Activated T-helper 1 cell treated with anti-CD3 and anti-CD28 coated beads, Interleukin-12 subunit alpha, Interleukin-12 subunit beta, Interleukin-2, Interleukin-4 antibody, amounts not matched to agents 30 ng/mL and 10 ng/mL and 1 ng/mL, durations not matched to agents 14 hours and 24 hours and 36 hours (primary cell): ENCODE measurements at regions of chr1 and their contacts with region 1.

Region 1: GRCh38 chr1:179882243-179883039 is at the start of gene TOR1AIP1:
- DNase-seq: peak; percentile 98
- H3K4me3 Mint-ChIP-seq: peak within 1 kb of the TSS; percentile 95
- H3K27ac Mint-ChIP-seq: peak within 1 kb of the TSS; percentile 100
- H3K4me1 Mint-ChIP-seq: peaks cover 55% of the 10 kb centered on the region
- H3K27me3 Mint-ChIP-seq: no peaks in the 10 kb centered on the region
- total RNA-seq, gene TOR1AIP1: 76.1 and 80.5 TPM in 2 replicates

Region 2: DNA sequence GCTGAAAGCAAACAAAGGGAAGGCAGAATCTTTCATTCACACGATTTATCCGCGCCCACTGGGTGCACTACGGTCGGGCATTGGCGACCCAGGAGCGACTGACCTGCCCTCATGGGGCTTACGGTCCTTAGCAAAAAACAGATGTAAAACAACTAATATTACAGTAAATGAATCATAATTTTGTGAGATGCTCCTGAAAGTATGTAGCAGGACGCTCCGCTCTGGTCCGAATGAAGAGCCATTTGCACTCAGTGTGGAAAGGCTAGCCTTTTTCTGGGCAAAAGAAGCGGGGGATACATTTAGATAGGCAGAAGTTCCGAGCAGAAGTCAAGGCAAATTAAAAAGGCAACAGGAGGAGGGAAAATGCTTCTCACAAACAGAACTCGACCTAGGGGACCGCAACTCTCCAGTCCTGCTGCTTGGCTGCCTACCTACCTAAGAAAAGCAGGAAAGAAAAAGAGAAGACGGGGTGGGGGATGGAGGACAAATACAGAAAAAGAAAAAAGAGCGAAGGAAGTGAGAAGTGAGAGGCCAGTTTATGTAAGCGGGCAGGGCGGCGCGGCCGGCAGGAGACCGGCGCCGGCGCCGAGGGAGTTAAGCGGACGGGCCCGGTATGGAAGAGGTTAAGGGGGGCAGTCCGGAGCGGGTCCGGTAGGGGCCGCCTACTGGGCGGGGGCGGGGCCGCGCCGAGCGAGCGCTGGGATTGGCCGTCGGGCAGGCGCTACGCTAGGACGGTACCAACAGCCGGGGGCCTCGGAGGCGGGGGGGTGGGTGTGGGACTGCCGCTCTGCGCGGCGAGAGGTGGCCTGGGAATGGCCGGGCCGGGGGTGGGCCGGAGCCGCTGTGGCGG is 857.1 kb before region 1 on chr1 and contains the start of gene FAM20B:
- intact Hi-C with region 1: loop called (anchors 5 kb)
- DNase-seq: peak; percentile 86
- H3K4me3 Mint-ChIP-seq: peak within 1 kb of the TSS; percentile 89
- H3K27ac Mint-ChIP-seq: peak within 1 kb of the TSS; percentile 82
- H3K4me1 Mint-ChIP-seq: peaks cover 43% of the 10 kb centered on the region
- H3K27me3 Mint-ChIP-seq: peaks cover 18% of the 10 kb centered on the region
- total RNA-seq, gene FAM20B: 36.6 and 39.2 TPM in 2 replicates

Region 3: DNA sequence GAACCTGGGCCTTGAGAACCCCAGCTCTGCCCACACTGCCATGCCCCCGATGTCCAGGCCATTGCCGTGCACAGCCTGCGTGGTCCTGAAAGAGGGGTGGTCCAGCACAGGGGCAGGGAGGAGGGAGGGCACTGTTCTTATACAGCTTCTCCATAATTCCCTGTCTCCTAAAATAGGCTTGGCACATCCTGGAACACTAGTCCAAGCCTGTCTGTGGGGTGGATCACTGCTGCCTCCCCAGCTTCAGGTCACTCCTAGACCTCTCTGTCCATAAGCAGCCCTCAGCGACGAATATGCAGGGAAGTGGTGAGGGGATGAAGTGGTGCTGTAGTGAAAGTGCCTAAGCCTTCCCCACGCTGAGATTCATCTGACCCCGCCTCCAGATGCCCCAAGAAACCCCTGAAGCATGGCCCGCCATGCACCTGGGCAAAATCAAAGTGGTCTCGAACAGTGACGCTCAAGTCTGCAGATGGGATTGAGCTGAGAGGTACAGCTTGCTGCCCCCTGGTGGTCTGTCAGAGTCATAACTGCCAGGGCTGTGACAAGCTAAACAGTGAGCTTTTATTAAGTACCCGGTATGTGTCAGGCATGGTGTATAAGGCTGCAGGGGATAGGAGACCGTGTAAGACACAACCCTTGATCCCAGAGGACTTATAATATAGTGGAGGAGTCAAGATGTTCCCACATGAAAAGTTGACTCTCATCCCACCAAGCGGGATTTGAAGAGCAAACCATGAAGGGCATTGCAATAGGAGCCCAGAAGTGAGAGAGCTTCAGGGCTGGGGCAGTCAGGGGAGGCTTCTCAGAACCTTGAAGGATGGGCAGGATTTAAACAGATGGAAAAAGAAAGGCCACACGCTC is 72.7 kb before region 1 on chr1:
- intact Hi-C with region 1: loop called (anchors 2 kb)
- DNase-seq: peak; percentile 43
- H3K4me3 Mint-ChIP-seq: no peak overlapping the region
- H3K27ac Mint-ChIP-seq: no peak overlapping the region
- H3K4me1 Mint-ChIP-seq: peaks cover 11% of the 10 kb centered on the region
- H3K27me3 Mint-ChIP-seq: peaks cover 6% of the 10 kb centered on the region

Region 4: DNA sequence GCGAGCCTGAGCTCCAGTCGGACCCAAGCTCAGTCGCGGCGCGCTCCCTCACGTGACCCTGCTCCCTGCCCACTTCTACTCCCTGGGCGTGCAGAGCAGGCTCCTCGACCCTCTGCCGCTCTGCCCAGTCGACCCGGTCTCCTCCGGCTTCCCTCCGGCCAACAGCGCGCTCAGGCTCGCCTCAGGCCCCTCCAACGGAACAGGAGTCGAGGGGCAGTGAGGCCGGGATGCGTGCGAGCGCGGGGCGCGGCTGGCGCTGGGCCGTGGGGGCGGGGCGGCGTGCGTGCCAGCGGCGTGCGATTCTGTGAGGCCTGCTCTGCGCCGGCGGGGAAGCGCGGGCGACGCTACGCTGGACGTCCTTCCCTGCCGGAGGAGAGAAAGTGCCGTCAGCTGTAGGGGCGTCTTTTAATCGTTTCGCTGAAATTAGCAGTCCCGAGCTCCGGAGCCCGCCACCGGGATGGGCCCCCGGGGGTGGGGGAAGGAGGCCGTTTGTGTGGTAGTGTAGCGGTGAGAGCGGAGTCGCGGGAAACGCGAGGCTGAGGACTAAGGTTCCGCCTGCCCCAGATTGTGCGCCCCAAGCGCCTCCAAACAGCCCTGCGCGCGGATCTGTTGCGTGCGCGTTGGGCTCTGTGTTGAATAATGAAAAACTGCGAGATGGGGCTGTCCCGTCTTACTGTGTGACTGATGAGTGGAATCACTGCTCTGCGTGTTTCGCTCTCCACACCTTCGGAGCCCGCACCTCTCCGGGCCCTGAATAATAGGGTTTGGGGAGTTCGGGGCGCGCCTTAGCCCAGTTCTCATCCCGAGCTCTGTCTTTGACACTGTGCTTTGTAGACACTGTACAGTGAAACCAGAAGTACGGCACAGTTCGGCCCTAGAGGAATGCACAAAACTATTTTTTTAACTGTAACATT is 620.2 kb after region 1 on chr1 and contains the start of gene ACBD6:
- intact Hi-C with region 1: loop called (anchors 2 kb)
- DNase-seq: peak; percentile 81
- H3K4me3 Mint-ChIP-seq: peak within 1 kb of the TSS; percentile 97
- H3K27ac Mint-ChIP-seq: peak within 1 kb of the TSS; percentile 97
- H3K4me1 Mint-ChIP-seq: peaks cover 25% of the 10 kb centered on the region
- H3K27me3 Mint-ChIP-seq: peaks cover 3% of the 10 kb centered on the region
- total RNA-seq, gene ACBD6: 49.4 and 50.9 TPM in 2 replicates

Region 5: DNA sequence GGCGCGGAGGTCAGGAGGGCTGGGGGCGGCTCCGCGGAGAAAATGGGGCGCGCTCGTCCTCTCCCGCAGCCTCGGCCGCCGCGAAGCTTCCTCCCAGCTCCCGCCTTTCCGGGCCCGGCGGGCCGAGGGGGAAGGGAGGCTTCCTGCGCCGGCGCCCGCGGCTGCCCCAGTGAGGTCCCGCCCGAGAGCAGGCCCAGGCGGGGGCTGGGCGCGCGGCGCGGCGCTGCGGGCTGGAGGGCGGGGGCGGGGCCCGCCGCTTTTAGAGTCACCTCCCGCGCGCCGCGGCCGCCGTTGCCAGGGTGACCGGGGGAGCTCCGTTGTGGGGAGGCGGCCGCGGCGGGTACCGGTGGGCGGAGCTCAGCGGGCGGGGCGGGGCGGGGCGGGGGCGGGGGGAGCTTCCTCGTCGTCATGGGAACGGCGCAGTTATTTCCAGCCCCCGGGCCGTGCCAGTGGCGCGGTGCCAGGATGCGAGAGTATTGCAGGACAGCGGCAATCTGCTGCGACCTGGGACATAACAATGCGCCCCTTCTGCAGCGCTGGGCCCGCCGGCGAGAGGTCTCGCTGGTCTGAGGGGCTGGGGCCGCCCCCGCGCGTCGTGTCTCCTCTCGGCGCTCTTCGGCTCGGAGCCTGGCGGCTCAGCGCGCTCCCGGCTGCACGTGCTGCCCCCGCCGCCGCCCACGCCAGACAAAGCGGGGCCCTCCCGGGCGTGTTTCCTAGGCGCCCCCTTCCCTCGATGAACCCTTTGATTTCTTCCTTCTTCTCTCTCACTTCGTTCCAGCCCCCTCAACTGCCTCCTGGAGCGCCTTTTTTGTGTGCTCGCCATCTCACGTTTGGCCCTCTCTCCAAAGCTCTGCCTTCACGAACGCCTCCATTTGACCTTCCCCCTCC is 1222.9 kb after region 1 on chr1:
- intact Hi-C with region 1: loop called (anchors 10 kb)
- DNase-seq: peak; percentile 87
- H3K4me3 Mint-ChIP-seq: peak overlapping the region; percentile 82
- H3K27ac Mint-ChIP-seq: peak overlapping the region; percentile 88
- H3K4me1 Mint-ChIP-seq: peaks cover 72% of the 10 kb centered on the region
- H3K27me3 Mint-ChIP-seq: peaks cover 34% of the 10 kb centered on the region